ENCODE measurements at regions of chrX and their contacts with region 1.

Region 1: DNA sequence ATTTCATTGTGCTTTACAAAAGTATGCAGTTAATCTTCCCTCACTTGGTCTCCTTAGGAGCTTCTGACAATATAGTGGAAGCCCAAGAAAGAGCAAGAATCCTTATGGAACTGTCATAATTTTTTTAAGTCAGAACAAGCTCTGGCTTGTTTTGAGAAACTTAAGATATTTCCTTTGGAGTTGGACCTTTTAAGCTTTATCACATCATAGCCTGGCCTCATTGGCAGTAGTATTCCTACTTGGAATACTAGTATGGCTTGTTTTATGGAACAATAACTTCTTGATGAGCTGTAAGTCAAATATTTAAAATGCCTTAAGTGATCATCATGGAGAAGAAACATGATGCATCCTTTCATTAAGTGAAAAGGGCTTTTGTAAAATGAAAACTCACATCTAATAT is 78.1 kb upstream of the NRK start:
- DNase-seq: peak; percentile 73
- ATAC-seq: peak; percentile 82
- H3K4me3 ChIP-seq: no peak overlapping the region; the same call in 1 of the 2 replicates
- H3K27ac ChIP-seq: peak overlapping the region; percentile 44
- H3K4me1 ChIP-seq: peaks cover 33% of the 10 kb centered on the region
- H3K27me3 ChIP-seq: no peaks in the 10 kb centered on the region
- CTCF ChIP-seq: no peak

Region 2: DNA sequence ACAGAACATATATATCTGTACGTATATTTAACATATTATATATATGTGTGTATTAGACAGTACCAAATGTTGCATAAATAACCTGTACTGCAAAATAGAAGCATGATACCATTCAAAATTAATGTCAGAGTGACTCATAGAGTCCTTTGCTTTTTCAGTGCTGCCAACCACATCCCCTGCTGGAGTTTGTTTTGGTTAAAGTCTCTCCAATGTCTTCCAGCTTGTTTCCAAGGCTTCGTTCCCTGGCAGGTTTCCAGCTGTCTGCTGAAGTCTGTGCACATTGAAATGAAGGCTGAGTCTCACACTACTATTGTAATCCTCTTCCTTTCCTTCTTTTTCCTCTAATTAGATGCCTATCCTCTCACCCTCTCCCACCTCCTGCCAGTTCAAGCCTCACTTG is 93.0 kb after region 1 on chrX:
- CTCF ChIA-PET with region 1: no interaction called
- POLR2A ChIA-PET with region 1: no interaction called
- intact Hi-C with region 1: loop called (anchors 5 kb)
- DNase-seq: peak; percentile 90
- ATAC-seq: peak; percentile 97
- H3K4me3 ChIP-seq: no peak overlapping the region
- H3K27ac ChIP-seq: no peak overlapping the region
- H3K4me1 ChIP-seq: peaks cover 12% of the 10 kb centered on the region
- H3K27me3 ChIP-seq: no peaks in the 10 kb centered on the region
- CTCF ChIP-seq: no peak